Activated T-helper 2 cell treated with anti-CD3 and anti-CD28 coated beads, Interferon-gamma antibody, Interleukin-2, Interleukin-4, amounts not matched to agents 10 μg/mL and 5 μg/mL and 100 μg/mL, durations not matched to agents 14 hours and 24 hours and 36 hours (primary cell): ENCODE measurements at regions of chr19 and their contacts with region 1.

Region 1: GRCh38 chr19:18192673-18193387 is at the start of gene MPV17L2:
- DNase-seq: peak; percentile 99
- H3K4me3 Mint-ChIP-seq: peak within 1 kb of the TSS; percentile 82
- H3K27ac Mint-ChIP-seq: peak within 1 kb of the TSS; percentile 79
- H3K4me1 Mint-ChIP-seq: peaks cover 18% of the 10 kb centered on the region
- H3K27me3 Mint-ChIP-seq: no peaks in the 10 kb centered on the region
- total RNA-seq, gene MPV17L2: 14.5 and 14.8 TPM in 2 replicates

Region 2: DNA sequence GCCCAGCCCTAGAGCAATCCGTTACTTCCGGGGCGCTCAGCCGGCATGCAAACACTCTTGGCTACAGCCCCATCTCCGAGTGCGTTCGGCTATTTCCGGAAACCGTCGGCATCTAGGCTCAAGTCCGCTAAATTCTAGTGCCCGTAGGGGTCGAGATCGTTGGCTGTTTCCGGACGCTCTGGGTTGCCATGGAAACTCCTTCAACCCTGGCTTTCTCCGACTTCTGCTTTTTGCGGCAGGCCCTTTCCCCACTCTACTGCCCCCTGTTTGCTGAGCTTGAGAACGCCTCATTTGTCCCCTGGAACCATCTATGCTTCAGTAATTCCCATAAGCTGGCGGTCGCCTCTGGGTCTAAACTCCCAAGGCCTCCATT is 40.4 kb before region 1 on chr19:
- intact Hi-C with region 1: loop called (anchors 2 kb)
- DNase-seq: peak; percentile 97
- H3K4me3 Mint-ChIP-seq: peak overlapping the region; percentile 93
- H3K27ac Mint-ChIP-seq: peak overlapping the region; percentile 100
- H3K4me1 Mint-ChIP-seq: peaks cover 22% of the 10 kb centered on the region
- H3K27me3 Mint-ChIP-seq: no peaks in the 10 kb centered on the region

Region 3: GRCh38 chr19:18173572-18174288 is 19.1 kb before region 1 on chr19 and contains the start of gene IFI30:
- intact Hi-C with region 1: loop called (anchors 2 kb)
- DNase-seq: peak; percentile 58
- H3K4me3 Mint-ChIP-seq: peak within 1 kb of the TSS; percentile 85
- H3K27ac Mint-ChIP-seq: peak within 1 kb of the TSS; percentile 67
- H3K4me1 Mint-ChIP-seq: peaks cover 22% of the 10 kb centered on the region
- H3K27me3 Mint-ChIP-seq: no peaks in the 10 kb centered on the region
- total RNA-seq, gene IFI30: 37.0 and 41.2 TPM in 2 replicates

Region 4: DNA sequence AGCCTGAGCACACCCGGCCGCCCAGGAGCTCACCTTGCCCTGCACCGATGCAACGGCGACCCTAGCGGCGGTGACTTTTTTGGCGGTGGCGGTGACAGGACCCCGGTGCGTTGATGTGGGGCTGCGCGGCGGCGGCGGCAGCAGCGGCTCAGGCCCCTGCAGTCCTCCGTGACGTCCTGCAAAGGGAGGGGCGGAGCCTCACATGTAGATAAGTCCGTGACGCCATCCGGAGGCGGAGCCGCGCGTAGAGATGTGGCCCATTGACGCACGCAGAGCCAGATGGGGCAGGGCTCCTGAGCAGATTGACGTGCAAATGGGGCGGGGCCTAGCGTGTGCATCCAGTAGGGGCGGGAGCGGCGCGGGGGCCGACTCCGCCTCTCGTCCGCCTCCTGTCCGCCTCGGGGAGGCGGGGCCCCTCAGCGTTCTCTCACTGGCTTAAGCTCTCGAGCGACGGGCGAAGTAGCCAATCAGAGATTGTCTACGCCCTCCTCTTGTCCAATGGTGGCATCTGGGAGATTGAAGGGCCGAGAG is 11.1 kb after region 1 on chr19 and contains the start of gene RAB3A:
- intact Hi-C with region 1: loop called (anchors 1 kb)
- DNase-seq: peak; percentile 99
- H3K4me3 Mint-ChIP-seq: peak within 1 kb of the TSS; percentile 94
- H3K27ac Mint-ChIP-seq: peak within 1 kb of the TSS; percentile 95
- H3K4me1 Mint-ChIP-seq: peaks cover 11% of the 10 kb centered on the region
- H3K27me3 Mint-ChIP-seq: peaks cover 2% of the 10 kb centered on the region
- total RNA-seq, gene RAB3A: 6.3 and 7.4 TPM in 2 replicates

Region 5: DNA sequence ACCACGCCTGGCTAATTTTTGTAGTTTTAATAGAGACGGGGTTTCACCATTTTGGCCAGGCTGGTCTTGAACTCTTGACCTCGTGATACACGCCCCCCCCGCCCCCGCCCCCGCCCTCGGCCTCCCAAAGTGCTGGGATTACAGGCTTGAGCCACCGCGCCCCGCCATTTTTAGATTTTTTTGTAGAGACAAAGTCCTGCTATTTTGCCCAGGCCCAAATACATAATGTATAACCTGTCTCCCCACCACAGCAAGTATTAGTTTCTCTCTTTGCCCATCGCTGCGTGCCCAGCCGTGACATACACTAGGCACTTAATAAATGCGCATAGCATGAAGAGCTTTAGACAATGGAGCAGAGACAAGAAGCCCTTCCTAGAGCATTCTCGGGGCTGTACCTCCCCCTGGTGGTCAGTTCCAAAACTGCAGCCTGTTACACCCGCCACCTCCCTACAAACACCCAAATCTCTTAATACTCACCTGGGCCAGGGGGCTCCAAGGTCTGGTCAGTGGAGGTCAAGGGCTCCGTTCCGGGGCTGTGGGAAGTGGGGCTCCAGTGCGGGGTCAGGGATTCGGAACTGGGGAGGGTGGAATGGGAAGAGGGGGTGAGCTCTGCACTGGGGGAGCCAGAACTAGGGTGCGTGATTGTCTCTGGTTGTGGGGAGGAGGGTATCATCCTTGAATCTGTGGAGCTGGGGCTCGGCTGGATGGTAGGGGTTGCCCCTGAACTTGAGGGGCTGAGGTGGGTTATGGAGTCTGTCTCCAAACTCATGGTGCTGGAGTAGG is 58.9 kb after region 1 on chr19:
- intact Hi-C with region 1: loop called (anchors 5 kb)
- DNase-seq: peak; percentile 71
- H3K4me3 Mint-ChIP-seq: no peak overlapping the region
- H3K27ac Mint-ChIP-seq: no peak overlapping the region
- H3K4me1 Mint-ChIP-seq: no peaks in the 10 kb centered on the region
- H3K27me3 Mint-ChIP-seq: peaks cover 22% of the 10 kb centered on the region

Region 6: DNA sequence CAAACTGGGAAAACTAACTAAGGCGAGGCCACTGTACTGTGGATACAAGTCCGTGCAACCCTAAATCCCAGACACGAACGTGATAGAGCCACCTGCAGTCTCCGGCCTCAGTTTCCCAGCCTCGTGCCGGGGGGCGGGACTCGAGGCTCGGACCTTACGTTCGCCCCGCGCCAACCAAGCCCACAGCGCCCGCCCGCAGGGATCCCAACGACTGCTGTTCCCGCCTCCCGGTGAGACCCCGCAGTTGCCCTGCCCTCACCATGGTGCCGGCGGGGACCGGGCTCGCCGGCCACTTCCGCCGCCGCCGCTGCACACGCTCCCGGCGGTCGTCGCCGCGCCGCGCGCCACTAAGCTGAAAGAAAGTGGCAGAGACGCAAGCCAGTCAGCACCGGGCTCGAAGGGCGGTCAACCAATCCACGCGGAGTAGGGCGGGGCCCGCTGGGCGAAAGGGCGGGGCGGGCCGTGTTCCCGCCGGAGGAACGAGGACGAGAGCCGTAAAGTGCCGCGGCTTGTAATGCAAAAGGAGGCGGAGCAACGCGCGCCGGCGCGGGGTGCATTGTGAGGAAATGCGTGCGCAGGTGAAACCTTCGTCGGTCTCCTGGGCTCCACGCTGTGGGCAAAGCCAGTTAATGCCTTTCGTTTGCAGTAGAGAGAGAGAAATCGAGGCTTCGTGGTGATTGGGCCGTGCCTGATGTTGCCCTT is 130.1 kb after region 1 on chr19 and contains the start of gene LSM4:
- intact Hi-C with region 1: loop called (anchors 5 kb)
- DNase-seq: peak; percentile 99
- H3K4me3 Mint-ChIP-seq: peak within 1 kb of the TSS; percentile 94
- H3K27ac Mint-ChIP-seq: peak within 1 kb of the TSS; percentile 97
- H3K4me1 Mint-ChIP-seq: peaks cover 47% of the 10 kb centered on the region
- H3K27me3 Mint-ChIP-seq: no peaks in the 10 kb centered on the region
- total RNA-seq, gene LSM4: 198 and 208 TPM in 2 replicates